ENCODE measurements at regions of chr19 and their contacts with region 1.

Region 1: DNA sequence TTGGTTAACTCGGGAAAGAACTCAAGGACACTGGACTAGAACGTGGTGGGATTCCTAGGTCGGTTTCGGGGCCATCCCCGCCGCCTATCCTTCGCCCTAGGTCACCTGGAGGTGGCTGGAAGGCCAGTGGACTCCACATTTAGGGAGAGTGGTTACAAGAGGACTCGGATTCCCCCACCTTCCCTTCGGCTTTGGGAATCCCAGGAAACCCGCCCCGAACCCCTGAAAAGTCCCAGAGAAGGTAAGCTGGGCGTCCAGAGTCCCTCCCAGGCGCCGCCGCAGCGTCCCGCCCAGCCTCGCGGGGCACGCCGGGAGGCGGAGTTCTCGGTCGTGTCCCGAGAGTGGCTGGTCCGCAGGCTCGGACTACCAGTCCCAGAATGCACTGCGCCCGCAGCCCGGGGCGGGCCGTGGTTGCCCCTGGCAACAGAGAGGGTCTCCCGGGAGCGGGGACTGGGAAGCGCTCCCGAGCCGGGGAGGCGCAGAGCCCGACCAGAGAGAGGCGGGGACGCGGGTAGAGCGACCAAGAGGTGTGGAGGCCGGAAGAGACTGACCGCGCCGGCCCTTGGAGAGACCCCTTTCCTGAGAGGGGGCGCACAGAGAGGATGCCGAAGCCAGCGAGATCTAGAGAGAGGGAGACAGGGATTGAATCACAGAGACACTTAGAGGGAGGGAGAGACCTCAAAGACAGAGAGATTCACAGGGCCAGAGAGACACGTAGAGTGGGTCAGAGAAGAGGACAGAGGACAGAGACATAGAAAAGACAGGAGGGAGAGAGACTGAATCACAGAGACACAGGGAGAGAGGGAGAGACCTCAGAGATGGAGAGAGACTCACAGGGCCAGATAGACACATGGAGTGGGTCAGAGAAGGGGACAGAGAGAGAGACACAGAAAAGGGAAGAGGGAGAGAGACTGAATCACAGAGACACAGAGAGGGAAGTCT is 2.6 kb upstream of the PRKCG start:
- DNase-seq: peak; percentile 91 to 96
- H3K4me3 ChIP-seq: peak overlapping the region; percentile 22 to 36
- H3K27ac ChIP-seq: no peak overlapping the region
- H3K4me1 ChIP-seq: peaks cover 0 to 16% of the 10 kb centered on the region in 2 donors
- H3K27me3 ChIP-seq: peaks cover 22 to 32% of the 10 kb centered on the region in 2 donors
- CTCF ChIP-seq: peak in 2 of 4 experiments; percentile 3 to 12
- POLR2A ChIP-seq: no peak

Region 2: DNA sequence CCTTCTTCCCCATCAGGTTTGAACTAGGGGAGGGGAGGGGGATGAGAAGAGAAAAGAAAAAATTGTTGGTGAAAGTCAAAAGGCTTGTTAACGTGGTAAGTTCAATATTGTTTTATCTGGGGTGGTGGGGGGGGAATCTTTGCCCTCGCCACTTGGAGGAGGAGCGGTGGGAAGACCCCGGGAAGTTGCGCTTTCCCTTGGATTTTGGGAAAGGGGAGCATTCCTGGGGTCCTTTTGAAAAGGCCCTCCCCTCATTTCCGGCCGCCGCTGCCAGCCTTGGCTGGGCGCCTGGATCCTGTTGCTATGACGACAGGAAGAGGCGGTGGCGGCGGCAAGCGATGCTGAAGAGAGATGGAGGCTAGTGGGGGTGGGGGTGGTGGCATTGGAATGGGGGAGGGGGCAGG is 78.8 kb after region 1 on chr19:
- intact Hi-C with region 1: no loop called
- DNase-seq: no peak
- H3K4me3 ChIP-seq: no peak overlapping the region
- H3K27ac ChIP-seq: no peak overlapping the region
- H3K4me1 ChIP-seq: no peaks in the 10 kb centered on the region
- H3K27me3 ChIP-seq: peaks cover 5 to 33% of the 10 kb centered on the region in 2 donors
- CTCF ChIP-seq: no peak
- POLR2A ChIP-seq: no peak

Region 3: DNA sequence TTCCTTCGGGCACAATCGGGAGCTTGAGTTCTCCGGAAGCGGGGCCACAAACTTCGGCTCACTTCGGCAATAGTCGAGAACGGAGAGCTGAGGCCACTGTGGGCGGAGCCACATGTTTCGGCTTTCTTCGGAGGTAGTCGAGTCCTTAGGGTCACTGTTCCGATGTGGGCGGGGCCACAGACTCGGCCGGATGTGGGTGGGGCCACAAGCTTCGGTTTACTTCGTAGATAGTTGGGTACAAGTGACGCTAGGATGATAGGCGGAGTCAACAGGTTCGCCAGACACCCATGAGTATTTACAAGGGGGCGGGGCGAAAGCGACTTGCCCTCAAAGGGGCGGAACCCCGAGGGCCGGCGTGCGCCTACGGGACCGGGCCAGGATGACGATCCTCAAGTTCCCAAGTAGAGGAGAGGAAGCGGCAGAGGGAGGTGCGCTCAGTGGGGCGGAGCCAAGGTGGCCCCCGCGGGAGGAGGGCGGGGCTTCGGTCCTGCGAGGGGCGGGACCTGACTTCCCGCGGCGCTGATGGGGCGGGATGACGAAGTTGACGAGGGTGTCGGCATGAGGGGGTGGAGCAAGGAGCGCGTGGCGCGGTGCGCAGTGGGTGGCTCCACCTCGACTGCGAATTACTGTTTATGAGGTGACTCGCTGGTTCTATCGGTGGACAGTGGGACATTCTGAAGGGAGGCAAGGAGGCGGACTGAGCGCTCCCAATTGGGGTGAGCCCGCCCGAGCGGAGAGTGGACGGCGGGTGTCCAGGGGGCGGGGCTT is 310.5 kb after region 1 on chr19:
- intact Hi-C with region 1: loop called (anchors 5 kb)
- DNase-seq: peak; percentile 100
- H3K4me3 ChIP-seq: peak overlapping the region; percentile 59 to 63
- H3K27ac ChIP-seq: peak overlapping the region; percentile 98
- H3K4me1 ChIP-seq: peaks cover 0 to 17% of the 10 kb centered on the region in 2 donors
- H3K27me3 ChIP-seq: no peaks in the 10 kb centered on the region
- CTCF ChIP-seq: no peak
- POLR2A ChIP-seq: peak in 1 of 2 donors; percentile 88